Heart left ventricle (tissue), 16 donors: ENCODE measurements at regions of chr6 and their contacts with region 1.

Region 1: DNA sequence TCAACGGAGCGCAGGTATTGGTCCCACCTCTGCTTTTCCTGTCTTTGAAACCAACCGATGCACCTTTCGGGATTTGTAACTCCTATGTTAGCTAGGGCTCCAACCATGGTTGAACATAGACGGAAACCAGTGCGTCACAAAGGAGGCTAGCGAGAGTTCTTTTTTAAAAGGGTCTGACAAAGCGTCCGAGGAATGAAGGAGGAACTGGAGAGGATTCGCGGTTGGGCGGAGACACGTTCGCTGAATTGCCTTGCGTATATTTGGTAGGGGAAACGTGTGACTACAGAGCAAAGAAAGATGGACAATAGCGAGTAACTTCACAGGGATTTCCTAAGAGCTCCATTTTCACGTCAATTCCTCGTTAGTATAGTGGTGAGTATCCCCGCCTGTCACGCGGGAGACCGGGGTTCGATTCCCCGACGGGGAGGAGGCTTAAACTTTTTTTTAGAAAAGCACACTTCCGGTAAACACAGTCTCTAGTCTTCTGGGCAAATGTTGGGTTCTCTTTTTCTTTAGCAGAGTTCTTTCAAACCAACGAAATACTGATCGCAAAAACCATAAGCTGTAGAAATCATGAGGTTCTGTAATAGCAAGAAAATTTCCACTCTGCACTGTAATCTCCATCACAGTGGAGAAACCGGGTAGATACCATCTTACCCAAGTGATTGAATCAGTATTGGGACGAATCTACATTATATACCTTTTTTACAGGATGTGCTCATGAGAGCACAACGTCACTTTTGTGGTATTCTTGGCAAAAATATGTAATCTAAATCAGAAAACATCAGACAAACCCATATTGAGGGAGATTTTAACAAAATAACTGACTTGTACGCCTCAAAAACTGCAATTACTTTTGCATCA is 6.6 kb upstream of the ZNF184 start:
- DNase-seq: peak; percentile 51 to 89 (median 76)
- ATAC-seq: peak; percentile 89 to 95 (median 94)
- H3K4me3 ChIP-seq: peak overlapping the region; percentile 70 to 96 (median 76)
- H3K27ac ChIP-seq: peak overlapping the region; percentile 92 to 100 (median 96)
- H3K4me1 ChIP-seq: peaks cover 0 to 15% (median 10%) of the 10 kb centered on the region in 12 donors
- H3K27me3 ChIP-seq: no peaks in the 10 kb centered on the region
- CTCF ChIP-seq: no peak
- POLR2A ChIP-seq: peak in 1 of 2 donors; percentile 24

Region 2: GRCh38 chr6:27332692-27333641 is 146.6 kb before region 1 on chr6:
- intact Hi-C with region 1: no loop called
- DNase-seq: no peak
- ATAC-seq: no peak
- H3K4me3 ChIP-seq: peak overlapping the region in 5 of 12 donors; percentile 1 to 25 (median 14)
- H3K27ac ChIP-seq: no peak overlapping the region
- H3K4me1 ChIP-seq: peaks cover 0 to 7% (median 0%) of the 10 kb centered on the region in 12 donors
- H3K27me3 ChIP-seq: peaks cover 0 to 58% (median 37%) of the 10 kb centered on the region in 9 donors
- CTCF ChIP-seq: no peak
- POLR2A ChIP-seq: no peak

Region 3: DNA sequence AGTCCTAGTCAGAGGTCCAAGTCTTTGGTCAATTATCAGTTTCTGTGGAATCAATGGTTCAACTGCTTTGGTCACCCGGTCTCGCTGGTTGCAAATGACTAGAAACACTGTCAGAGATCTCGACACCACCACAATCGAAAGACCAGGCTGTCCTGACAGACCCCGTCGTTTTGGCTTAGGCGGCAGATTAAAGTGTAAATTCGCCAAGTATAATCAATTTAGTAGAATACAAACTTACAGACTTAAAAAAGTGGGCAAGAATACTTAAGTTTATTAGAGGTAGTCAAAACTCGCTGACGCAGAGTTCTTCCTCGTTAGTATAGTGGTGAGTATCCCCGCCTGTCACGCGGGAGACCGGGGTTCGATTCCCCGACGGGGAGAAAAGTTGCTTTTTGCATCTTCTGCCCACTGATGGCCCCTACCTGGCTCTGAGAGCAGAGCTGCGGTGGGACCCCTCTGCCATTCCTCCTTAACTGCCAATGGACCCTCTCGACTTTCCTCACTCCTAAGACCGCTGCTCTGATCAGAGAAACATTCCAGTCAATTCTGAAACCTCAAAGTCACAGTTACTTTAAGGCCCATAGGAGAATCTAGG is 24.0 kb after region 1 on chr6:
- intact Hi-C with region 1: loop called in 2 of 10 experiments (anchors 1 to 2 kb)
- DNase-seq: peak; percentile 40 to 79 (median 44)
- ATAC-seq: peak; percentile 72 to 82 (median 79)
- H3K4me3 ChIP-seq: peak overlapping the region in 11 of 12 donors; percentile 29 to 63 (median 52)
- H3K27ac ChIP-seq: peak overlapping the region in 1 of 12 donors; percentile 2
- H3K4me1 ChIP-seq: peaks cover 0 to 13% (median 5%) of the 10 kb centered on the region in 12 donors
- H3K27me3 ChIP-seq: peaks cover 0 to 28% (median 2%) of the 10 kb centered on the region in 9 donors
- CTCF ChIP-seq: no peak
- POLR2A ChIP-seq: no peak

Region 4: DNA sequence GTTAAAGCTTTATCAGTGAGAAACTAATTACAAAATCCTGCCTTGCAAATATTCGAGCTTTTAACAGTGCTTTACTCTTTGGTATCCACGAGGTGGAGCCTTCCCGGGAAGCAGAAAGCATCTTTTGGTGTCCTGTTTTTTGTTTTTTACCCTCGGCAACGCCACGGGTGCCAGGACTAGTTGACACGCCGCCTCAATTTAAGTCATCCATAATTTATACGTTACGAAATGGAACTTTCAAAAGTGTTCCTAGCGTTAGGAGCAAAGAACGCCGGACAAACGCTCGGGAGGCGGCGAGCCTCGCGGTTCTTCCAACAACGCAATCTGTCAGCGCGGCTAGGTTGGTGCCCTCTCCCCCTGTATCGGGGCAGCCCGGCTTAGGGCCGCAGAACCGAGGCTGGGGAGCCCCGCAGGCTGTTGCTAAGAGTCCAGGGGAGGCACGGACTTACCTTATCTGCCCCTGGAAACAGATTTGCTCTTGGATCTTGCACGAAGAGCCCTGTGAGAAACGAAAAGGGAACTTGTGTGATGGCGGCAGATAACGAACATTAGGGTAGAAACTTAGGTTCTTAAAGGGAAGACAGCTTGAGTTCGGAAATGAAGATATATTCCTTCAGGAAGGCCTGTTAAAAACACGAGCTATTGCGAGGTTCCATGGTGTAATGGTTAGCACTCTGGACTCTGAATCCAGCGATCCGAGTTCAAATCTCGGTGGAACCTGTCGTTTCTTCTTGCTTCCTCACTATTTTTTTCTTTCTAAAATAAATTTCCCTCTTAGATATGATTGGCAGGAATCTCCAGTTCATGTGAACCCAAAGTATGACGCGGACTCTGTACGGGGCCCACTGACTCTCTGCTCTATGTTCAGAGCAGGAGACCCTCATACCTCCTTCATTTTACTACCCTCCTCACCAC is 39.6 kb after region 1 on chr6:
- intact Hi-C with region 1: loop called in 1 of 10 experiments (anchors 2 kb)
- DNase-seq: peak; percentile 50 to 71 (median 55)
- ATAC-seq: peak; percentile 90 to 95 (median 93)
- H3K4me3 ChIP-seq: peak overlapping the region; percentile 43 to 83 (median 70)
- H3K27ac ChIP-seq: peak overlapping the region; percentile 68 to 94 (median 80)
- H3K4me1 ChIP-seq: peaks cover 0 to 13% (median 7%) of the 10 kb centered on the region in 12 donors
- H3K27me3 ChIP-seq: peaks cover 0 to 23% (median 7%) of the 10 kb centered on the region in 9 donors
- CTCF ChIP-seq: peak; percentile 48 to 78 (median 66)
- POLR2A ChIP-seq: no peak

Region 5: GRCh38 chr6:27592481-27593199 is 113.1 kb after region 1 on chr6:
- intact Hi-C with region 1: no loop called
- DNase-seq: no peak
- ATAC-seq: peak in 1 of 4 donors; percentile 29
- H3K4me3 ChIP-seq: peak overlapping the region in 1 of 12 donors; percentile 15
- H3K27ac ChIP-seq: no peak overlapping the region
- H3K4me1 ChIP-seq: no peaks in the 10 kb centered on the region
- H3K27me3 ChIP-seq: peaks cover 16 to 94% (median 67%) of the 10 kb centered on the region in 9 donors
- CTCF ChIP-seq: no peak
- POLR2A ChIP-seq: no peak

Region 6: DNA sequence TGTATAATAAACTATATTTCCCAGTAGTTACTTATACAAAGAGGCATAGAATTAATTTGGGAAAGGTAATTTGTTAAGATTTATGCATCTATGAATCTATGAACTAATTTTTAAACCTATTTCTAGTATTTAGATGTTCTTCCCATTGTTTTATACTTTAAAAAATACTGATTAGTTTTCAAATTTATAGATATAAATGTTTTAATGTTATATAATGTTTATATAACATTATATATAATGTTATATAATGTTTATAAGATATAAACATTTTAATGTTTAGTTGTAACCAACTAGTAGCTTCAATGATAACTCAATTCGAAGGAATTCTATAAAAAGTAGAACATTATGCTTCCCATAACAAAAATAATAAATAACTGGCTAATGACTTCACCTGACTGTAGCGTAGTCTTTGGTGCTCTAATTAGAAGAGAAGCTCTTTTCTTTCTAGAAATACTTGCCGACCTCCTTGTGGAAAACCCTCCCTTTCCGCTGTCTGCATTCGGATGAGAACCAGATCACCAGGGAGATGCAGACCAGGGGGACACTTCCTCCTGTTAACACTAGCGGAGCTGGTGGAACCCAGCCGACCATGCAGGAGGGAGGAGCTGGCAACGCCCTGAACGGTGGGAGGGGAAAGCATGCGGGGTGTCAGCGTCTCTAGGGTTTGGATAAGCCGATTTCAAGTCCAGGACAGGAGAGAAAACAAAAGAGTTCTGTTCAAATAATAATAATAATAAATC is 274.3 kb after region 1 on chr6:
- intact Hi-C with region 1: loop called in 1 of 10 experiments (anchors 2 kb)
- DNase-seq: peak; percentile 37 to 81 (median 56)
- ATAC-seq: peak in 2 of 4 donors; percentile 67 to 77
- H3K4me3 ChIP-seq: peak overlapping the region in 10 of 12 donors; percentile 61 to 88 (median 69)
- H3K27ac ChIP-seq: no peak overlapping the region
- H3K4me1 ChIP-seq: peaks cover 0 to 23% (median 7%) of the 10 kb centered on the region in 12 donors
- H3K27me3 ChIP-seq: peaks cover 5 to 30% (median 20%) of the 10 kb centered on the region in 9 donors
- CTCF ChIP-seq: peak in 1 of 12 donors; percentile 7
- POLR2A ChIP-seq: peak in 1 of 2 donors; percentile 7